ENCODE measurements at regions of chr2 and their contacts with region 1.

Region 1: DNA sequence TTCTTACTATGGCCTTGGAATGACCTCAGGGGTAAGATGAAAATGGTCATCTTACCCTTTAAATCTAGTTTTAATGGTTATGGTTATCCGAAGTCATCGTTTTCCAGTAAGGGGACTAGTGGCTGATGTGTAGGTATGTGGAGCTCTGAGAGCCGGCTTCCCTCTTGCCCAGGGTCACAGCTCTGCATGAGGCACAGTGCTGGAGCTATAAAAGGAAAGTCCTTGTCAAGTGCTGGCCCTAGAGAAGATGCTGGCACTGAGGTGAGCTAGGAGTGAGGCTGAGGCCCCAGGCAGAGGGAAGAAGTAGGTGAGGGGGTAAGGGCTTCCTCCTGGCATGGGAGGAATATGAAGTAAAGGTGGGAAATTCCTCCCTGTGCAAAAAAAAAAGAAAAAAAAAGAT is 35.0 kb downstream of the SMARCAL1 start:
- DNase-seq: peak in 4 of 5 donors; percentile 28 to 69 (median 48)
- ATAC-seq: peak; percentile 85 to 91 (median 88)
- H3K4me3 ChIP-seq: no peak overlapping the region
- H3K27ac ChIP-seq: peak overlapping the region in 7 of 12 donors; percentile 14 to 63 (median 33)
- H3K4me1 ChIP-seq: peaks cover 0 to 12% (median 0%) of the 10 kb centered on the region in 12 donors
- H3K27me3 ChIP-seq: no peaks in the 10 kb centered on the region
- CTCF ChIP-seq: no peak
- POLR2A ChIP-seq: no peak

Region 2: DNA sequence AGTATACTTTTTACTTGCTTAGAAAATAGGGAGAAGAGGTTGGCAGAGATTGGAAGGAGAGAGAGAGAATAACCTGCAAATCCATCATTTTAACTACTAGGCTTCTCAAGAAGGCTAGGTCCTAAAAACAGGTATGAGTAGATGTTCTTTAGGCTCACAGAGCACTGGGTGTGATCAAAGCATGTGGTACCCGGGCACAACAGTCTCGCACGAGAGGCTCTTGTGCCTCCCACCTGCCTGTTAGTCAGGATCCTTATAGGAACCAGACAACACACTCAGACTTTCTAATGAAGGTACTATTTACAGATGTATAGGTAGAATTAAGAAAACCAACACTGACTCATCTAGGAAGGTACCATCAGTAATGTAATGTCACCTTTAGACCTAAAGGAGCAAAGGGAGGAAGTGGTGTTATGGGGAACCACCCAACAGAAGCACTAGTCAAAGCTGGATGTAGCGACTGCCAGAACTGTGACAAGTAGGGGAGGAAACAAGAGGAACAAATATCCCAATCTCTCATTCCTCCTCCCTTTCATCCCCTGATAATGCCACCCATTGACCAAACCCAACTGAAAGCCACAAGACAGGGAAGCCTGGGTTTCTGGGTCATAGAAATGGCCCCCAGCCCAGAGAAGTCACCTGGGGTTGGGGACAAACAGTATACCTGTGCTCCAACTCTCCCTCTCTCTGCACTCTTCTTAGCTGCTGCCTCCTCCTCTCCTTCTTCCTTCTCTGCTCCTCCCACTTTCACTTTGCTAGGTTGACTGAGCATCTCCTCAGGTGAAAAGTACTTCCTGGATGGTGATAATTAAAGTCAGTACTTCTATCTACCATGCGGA is 59.0 kb before region 1 on chr2:
- intact Hi-C with region 1: no loop called
- DNase-seq: no peak
- ATAC-seq: no peak
- H3K4me3 ChIP-seq: no peak overlapping the region
- H3K27ac ChIP-seq: no peak overlapping the region
- H3K4me1 ChIP-seq: peaks cover 0 to 12% (median 0%) of the 10 kb centered on the region in 12 donors
- H3K27me3 ChIP-seq: peaks cover 0 to 4% (median 0%) of the 10 kb centered on the region in 9 donors
- CTCF ChIP-seq: no peak
- POLR2A ChIP-seq: no peak

Region 3: DNA sequence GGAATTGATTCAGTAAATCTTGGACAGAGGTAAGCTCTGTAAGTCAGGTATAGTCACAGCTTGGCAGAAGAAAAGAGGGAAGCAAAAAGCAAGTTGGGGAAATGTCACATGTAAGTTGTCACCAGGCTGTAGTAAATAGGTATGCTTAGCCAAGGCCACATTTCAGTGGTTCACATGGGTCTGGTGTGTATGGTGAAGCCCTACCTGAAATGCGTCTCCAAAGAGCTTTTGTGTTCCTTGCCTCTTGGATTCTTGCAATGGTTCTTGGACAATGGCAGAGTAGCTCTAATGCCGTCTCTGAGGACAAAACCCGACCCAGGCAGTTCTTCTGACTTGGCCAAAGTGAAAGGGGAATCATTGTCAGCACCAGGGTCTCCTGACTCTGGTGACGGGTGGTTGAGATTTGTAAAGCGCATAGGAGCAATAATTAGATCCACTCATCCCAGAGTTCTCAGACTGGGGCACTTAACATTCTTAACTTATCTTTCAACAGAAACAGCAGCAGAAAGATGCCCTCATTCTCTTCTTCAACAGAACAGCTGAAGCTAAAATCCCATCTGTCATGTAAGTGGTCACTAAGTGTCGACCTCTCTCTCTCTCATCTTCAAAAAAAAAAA is 16.9 kb after region 1 on chr2:
- intact Hi-C with region 1: loop called in 1 of 10 experiments (anchors 1 kb)
- DNase-seq: peak in 1 of 5 donors; percentile 15
- ATAC-seq: peak in 3 of 4 donors; percentile 83 to 86 (median 84)
- H3K4me3 ChIP-seq: no peak overlapping the region
- H3K27ac ChIP-seq: peak overlapping the region in 8 of 12 donors; percentile 41 to 69 (median 52)
- H3K4me1 ChIP-seq: peaks cover 0 to 8% (median 0%) of the 10 kb centered on the region in 12 donors
- H3K27me3 ChIP-seq: no peaks in the 10 kb centered on the region
- CTCF ChIP-seq: no peak
- POLR2A ChIP-seq: no peak

Region 4: DNA sequence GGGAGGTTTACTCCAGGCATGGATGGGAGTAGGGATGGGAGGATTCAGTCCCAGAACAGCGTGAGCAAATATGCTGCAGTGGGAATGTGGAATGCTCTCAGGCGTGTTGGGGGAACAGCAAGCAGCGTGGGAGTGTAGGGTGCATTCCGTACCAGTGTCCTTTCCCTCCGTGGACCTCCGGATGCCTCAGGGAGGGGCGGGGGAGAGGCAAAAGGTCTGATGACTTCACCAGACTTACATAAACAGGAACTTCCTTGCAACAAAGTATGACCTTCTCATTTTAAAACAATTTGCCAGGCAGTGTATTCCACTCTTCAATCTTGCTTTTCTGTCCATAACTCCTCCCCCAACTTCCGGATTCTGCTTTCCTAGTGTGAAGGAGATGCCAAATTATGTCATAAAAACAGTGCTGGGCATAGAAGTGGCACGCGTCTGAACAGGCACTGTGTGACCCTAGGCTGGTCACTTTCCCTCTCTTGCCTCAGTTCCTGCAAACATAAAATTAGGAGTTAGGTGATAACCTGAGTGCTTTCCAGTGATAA is 88.2 kb after region 1 on chr2:
- intact Hi-C with region 1: no loop called
- DNase-seq: peak; percentile 70 to 81 (median 79)
- ATAC-seq: peak; percentile 71 to 89 (median 81)
- H3K4me3 ChIP-seq: peak overlapping the region in 2 of 12 donors; percentile 2 to 14
- H3K27ac ChIP-seq: peak overlapping the region; percentile 79 to 91 (median 87)
- H3K4me1 ChIP-seq: peaks cover 18 to 72% (median 49%) of the 10 kb centered on the region in 12 donors
- H3K27me3 ChIP-seq: no peaks in the 10 kb centered on the region
- CTCF ChIP-seq: no peak
- POLR2A ChIP-seq: peak in 1 of 2 donors; percentile 21